HEK293 (cell line): ENCODE measurements at regions of chr3 and their contacts with region 1.

Region 1: DNA sequence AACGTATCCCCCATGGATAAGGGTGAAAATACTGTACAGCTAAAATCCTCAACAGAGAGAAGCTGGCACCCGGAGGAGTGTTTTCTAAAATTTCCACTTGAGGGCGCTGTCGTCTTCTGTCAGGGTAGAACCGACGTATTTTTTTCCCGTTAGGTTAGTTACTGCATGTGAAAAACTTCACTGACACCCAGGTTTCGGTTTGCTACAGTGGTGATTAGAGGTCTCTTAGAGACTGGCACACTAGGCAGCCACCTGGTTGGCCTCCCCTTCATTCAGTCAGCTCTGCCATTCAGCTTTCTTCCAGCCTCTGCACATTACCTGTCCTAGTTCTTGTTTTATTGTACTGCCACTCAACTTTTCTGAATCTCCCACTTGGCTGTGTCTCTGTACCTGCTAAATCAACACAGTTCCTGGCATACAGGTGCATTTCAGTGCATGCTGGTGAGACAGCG is 18.4 kb downstream of the CCK start:
- H3K4me3 ChIP-seq: no peak overlapping the region
- H3K27ac ChIP-seq: no peak overlapping the region
- H3K4me1 ChIP-seq: no peaks in the 10 kb centered on the region
- CTCF ChIP-seq: no peak

Region 2: DNA sequence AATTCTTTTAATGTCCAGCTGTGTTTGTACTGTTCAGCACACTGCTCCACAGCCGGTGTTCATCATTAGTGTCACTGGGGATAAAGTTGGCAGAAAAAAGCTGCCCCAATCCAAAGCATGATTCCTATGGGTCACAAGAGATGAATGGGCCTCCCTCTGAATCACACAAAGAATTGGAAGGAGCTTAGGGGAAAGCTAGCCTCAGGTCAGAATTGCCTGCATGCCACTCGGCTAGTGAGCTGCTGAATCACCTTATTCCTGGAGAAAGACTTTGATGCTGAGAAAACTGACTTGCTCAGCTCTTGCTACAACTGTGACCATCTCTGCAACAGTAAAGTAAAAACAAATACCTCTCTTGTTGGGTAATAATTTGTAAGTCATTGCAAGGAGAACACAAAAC is 14.9 kb after region 1 on chr3:
- CTCF ChIA-PET with region 1: interaction called, 12 read pairs
- POLR2A ChIA-PET with region 1: no interaction called
- H3K4me3 ChIP-seq: no peak overlapping the region
- H3K27ac ChIP-seq: no peak overlapping the region
- H3K4me1 ChIP-seq: no peaks in the 10 kb centered on the region
- CTCF ChIP-seq: no peak

Region 3: GRCh38 chr3:42443819-42444436 is 196.3 kb after region 1 on chr3:
- CTCF ChIA-PET with region 1: interaction called, 104 read pairs
- POLR2A ChIA-PET with region 1: no interaction called
- H3K4me3 ChIP-seq: no peak overlapping the region
- H3K27ac ChIP-seq: no peak overlapping the region
- H3K4me1 ChIP-seq: no peaks in the 10 kb centered on the region
- CTCF ChIP-seq: peak; percentile 60

Region 4: DNA sequence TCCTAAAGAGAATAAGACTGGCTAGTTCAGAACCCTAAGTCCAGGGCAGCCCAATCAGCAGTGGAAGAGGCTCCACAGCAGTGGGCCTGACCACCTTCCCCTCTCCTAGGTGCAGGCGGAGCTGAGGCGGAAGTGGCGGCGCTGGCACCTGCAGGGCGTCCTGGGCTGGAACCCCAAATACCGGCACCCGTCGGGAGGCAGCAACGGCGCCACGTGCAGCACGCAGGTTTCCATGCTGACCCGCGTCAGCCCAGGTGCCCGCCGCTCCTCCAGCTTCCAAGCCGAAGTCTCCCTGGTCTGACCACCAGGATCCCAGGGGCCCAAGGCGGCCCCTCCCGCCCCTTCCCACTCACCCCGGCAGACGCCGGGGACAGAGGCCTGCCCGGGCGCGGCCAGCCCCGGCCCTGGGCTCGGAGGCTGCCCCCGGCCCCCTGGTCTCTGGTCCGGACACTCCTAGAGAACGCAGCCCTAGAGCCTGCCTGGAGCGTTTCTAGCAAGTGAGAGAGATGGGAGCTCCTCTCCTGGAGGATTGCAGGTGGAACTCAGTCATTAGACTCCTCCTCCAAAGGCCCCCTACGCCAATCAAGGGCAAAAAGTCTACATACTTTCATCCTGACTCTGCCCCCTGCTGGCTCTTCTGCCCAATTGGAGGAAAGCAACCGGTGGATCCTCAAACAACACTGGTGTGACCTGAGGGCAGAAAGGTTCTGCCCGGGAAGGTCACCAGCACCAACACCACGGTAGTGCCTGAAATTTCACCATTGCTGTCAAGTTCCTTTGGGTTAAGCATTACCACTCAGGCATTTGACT is 288.6 kb after region 1 on chr3:
- CTCF ChIA-PET with region 1: interaction called, 27 read pairs
- POLR2A ChIA-PET with region 1: no interaction called
- H3K4me3 ChIP-seq: no peak overlapping the region
- H3K27ac ChIP-seq: no peak overlapping the region
- H3K4me1 ChIP-seq: no peaks in the 10 kb centered on the region
- CTCF ChIP-seq: no peak